B cell (primary cell): ENCODE measurements at regions of chr1 and their contacts with region 1.

Region 1: DNA sequence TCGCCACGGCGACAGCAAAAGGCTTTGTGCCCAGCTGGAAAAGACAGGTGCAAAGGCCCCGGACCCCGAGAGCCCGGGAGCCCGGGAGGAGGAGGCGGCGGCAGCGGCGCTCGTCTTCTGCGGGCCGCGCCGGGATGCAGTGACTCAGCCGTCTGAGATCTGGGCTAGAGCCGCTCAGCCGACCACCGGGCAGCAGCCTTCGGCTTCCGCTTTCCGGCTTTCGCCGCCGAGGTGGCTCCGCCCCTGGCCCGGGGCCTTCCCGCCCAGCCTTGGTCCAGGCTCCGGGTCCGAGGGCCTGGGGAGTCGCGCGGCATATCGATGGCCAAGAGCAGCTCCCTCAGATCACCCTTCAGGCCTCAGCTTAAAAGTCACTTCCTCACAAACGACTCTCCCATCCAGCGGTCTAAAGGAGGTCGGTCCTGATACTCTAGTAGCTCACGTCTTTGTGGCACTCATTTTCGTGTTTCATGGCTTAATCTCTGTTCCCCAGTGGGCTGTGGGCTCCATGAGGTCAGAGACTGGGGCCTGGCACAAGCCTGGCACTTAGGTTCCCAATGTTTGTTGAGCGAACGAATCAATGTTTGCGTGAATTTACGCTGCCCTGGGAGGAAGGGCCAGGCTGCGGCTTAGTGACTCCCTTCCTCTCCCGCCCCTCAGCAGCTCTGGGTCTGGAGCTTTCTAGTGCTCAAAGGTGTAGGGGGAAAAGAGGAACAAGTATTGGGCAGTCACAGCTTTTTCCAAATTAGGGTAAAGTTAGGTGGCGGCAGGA is at the start of gene PHTF1:
- DNase-seq: peak; percentile 80
- ATAC-seq: peak; percentile 84
- H3K4me3 ChIP-seq: peak within 1 kb of the TSS; percentile 76 to 93 (median 92)
- H3K4me3 Mint-ChIP-seq: peak within 1 kb of the TSS; percentile 99
- H3K27ac ChIP-seq: peak within 1 kb of the TSS; percentile 86 to 90
- H3K27ac Mint-ChIP-seq: peak within 1 kb of the TSS; percentile 99
- H3K4me1 ChIP-seq: peaks cover 6 to 20% of the 10 kb centered on the region in 2 donors
- H3K4me1 Mint-ChIP-seq: peaks cover 23% of the 10 kb centered on the region
- H3K27me3 ChIP-seq: no peaks in the 10 kb centered on the region
- H3K27me3 Mint-ChIP-seq: no peaks in the 10 kb centered on the region
- CTCF ChIP-seq: no peak
- total RNA-seq, gene PHTF1: 18.5 and 25.7 TPM in 2 replicates

Region 2: DNA sequence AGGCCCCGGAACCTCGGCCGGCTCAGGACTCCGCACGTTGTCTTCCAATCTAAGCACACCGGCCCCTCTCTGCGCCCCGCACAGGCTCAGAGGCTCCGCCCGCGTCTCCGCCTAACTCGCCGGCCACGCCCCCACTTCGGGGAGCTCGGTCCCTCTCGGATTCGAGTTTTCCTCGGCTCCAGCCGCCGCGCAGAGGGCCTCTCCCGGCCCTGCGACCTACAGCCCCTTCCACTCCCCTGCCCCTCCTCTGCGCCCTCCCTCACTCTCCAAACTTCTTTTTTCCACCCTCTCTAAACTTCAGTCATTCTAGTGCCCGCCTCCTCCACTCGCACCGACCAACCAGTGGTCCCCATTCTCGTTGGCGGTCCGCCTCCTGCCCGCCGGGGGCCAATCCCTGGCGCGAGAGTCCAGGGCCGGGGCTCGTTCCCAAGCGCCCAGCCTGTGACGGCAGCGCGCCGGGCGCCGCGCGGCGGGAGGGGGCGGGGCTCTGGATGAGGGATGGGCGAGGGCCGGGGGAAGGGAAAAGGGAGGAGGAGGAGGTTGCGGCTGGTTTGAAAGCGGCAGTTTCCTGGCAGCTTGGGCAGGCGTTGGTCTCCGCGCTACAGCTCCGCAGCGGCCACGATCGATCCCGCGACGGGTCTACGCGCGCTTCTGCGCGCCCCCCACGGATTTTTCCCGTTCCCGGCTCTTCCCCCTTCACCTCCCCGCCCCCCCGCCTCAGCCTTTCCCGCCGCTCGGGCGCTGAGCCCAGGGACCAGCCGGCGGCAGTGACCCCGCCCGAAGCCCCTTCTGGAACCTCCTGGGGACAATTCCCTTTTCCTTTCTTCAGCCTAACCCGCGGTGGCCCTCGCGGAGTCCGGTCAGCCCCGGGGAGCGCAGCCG is 369.3 kb before region 1 on chr1 and contains the start of gene MAGI3:
- CTCF ChIA-PET with region 1: no interaction called
- POLR2A ChIA-PET with region 1: no interaction called
- intact Hi-C with region 1: loop called (anchors 5 kb)
- DNase-seq: peak; percentile 88
- ATAC-seq: peak; percentile 96
- H3K4me3 ChIP-seq: peak within 1 kb of the TSS; percentile 22 to 83 (median 76)
- H3K4me3 Mint-ChIP-seq: peak within 1 kb of the TSS; percentile 89
- H3K27ac ChIP-seq: no peak within 1 kb of the TSS
- H3K27ac Mint-ChIP-seq: peak within 1 kb of the TSS; percentile 42
- H3K4me1 ChIP-seq: peaks cover 16 to 19% of the 10 kb centered on the region in 2 donors
- H3K4me1 Mint-ChIP-seq: peaks cover 21% of the 10 kb centered on the region
- H3K27me3 ChIP-seq: peaks cover 0 to 22% (median 15%) of the 10 kb centered on the region in 4 experiments
- H3K27me3 Mint-ChIP-seq: peaks cover 43% of the 10 kb centered on the region
- CTCF ChIP-seq: no peak
- total RNA-seq, gene MAGI3: 0.67 and 0.83 TPM in 2 replicates

Region 3: DNA sequence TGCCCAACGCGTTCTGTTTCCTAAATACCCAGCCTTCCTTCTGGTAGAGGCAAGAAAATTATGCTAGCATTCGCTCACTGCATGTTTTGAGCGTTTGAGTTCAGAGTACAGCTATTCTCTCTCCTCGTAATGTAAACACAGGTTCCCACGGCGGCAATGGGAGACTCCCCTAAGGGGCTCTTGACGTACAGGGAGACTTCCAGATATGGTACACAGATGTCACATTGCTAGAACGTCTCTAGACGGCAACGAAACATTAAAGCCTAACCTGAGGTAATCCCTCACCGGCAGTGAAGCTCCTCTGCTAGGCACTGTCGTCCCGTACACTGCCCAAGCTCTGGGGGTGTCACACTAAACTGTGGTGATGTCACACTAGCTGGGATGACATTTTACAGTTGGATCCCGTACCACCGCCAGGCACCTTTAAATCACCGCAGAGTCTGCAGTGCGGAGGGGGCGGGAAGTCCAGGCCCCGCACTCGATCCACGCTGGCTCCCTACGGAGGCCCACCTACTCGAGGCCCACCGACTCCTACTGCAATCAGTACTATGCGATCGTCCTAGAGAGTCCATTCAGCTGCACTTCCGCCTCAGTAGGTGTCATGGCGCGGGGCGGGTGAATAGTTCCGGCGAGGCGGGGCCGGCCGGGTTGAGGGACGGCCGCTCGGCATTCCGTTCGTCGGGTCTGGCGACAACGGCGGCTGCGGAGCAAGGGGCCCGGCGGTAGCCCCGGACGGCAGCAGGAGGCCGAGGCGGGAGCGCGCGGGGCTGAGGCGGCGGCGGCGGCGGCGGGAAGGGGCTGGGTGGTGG is 169.6 kb after region 1 on chr1 and contains the start of gene HIPK1:
- CTCF ChIA-PET with region 1: interaction called, 4 read pairs
- POLR2A ChIA-PET with region 1: no interaction called
- intact Hi-C with region 1: loop called (anchors 1 kb)
- DNase-seq: peak; percentile 96
- ATAC-seq: peak; percentile 75
- H3K4me3 ChIP-seq: peak within 1 kb of the TSS; percentile 76 to 92 (median 86)
- H3K4me3 Mint-ChIP-seq: peak within 1 kb of the TSS; percentile 100
- H3K27ac ChIP-seq: peak within 1 kb of the TSS; percentile 98 to 99
- H3K27ac Mint-ChIP-seq: peak within 1 kb of the TSS; percentile 100
- H3K4me1 ChIP-seq: peaks cover 33 to 35% of the 10 kb centered on the region in 2 donors
- H3K4me1 Mint-ChIP-seq: peaks cover 49% of the 10 kb centered on the region
- H3K27me3 ChIP-seq: no peaks in the 10 kb centered on the region
- H3K27me3 Mint-ChIP-seq: no peaks in the 10 kb centered on the region
- CTCF ChIP-seq: no peak
- total RNA-seq, gene HIPK1: 48.0 and 48.2 TPM in 2 replicates